Psoas muscle (tissue), 8 donors: ENCODE measurements at regions of chr17 and their contacts with region 1.

Region 1: DNA sequence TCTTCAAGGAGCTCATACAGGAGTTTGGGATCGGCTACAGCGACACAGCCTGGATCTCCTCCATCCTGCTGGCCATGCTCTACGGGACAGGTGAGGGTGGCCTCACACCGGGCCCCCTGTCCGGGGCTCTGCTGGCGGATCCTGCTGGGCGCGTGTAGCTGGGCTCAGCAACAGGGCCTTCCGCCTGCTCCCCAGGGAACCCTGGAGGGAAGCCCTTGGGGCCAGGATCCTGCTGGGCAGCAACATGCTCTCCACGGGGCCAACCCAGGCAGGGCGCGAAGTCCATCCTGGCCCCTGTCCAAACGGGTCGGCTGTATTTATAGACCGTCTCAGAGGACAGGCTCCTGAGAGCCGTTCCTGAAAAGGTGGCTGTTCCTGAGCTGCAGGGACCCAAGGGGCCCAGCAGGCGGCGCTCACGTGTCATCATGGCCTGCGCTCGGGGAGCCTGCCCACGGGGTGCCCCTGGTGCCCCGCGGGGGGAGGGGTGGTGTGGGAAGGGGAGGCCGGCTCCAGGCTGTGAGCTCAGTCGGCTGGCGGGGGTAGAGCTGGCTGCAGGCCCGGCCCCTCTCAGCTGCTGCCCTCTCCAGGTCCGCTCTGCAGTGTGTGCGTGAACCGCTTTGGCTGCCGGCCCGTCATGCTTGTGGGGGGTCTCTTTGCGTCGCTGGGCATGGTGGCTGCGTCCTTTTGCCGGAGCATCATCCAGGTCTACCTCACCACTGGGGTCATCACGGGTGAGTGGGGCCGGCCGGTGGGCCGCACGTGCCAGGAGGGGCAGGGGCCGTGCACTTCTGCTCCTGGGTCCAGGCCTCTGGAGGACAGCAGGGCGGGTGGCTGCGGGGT is 7.5 kb downstream of the SLC16A3 start:
- DNase-seq: peak; percentile 81 to 95
- ATAC-seq: peak; percentile 41 to 67 (median 54)
- H3K4me3 ChIP-seq: peak overlapping the region; percentile 31
- H3K27ac ChIP-seq: peak overlapping the region; percentile 73
- H3K4me1 ChIP-seq: peaks cover 90% of the 10 kb centered on the region
- H3K27me3 ChIP-seq: no peaks in the 10 kb centered on the region
- CTCF ChIP-seq: peak; percentile 89

Region 2: GRCh38 chr17:82153745-82154375 is 82.5 kb before region 1 on chr17:
- intact Hi-C with region 1: no loop called
- DNase-seq: peak; percentile 81 to 91
- ATAC-seq: peak; percentile 89 to 97 (median 90)
- H3K4me3 ChIP-seq: no peak overlapping the region
- H3K27ac ChIP-seq: no peak overlapping the region
- H3K4me1 ChIP-seq: peaks cover 12% of the 10 kb centered on the region
- H3K27me3 ChIP-seq: no peaks in the 10 kb centered on the region
- CTCF ChIP-seq: peak; percentile 92

Region 3: GRCh38 chr17:82273327-82274133 is 37.2 kb after region 1 on chr17 and contains the start of gene CSNK1D:
- intact Hi-C with region 1: loop called in 1 of 2 experiments (anchors 5 kb)
- DNase-seq: peak; percentile 91 to 95
- ATAC-seq: peak; percentile 88 to 95 (median 92)
- H3K4me3 ChIP-seq: peak within 1 kb of the TSS; percentile 83
- H3K27ac ChIP-seq: peak within 1 kb of the TSS; percentile 95
- H3K4me1 ChIP-seq: peaks cover 46% of the 10 kb centered on the region
- H3K27me3 ChIP-seq: no peaks in the 10 kb centered on the region
- CTCF ChIP-seq: no peak
- total RNA-seq, gene CSNK1D: 73.5 to 139 (median 116) TPM

Region 4: DNA sequence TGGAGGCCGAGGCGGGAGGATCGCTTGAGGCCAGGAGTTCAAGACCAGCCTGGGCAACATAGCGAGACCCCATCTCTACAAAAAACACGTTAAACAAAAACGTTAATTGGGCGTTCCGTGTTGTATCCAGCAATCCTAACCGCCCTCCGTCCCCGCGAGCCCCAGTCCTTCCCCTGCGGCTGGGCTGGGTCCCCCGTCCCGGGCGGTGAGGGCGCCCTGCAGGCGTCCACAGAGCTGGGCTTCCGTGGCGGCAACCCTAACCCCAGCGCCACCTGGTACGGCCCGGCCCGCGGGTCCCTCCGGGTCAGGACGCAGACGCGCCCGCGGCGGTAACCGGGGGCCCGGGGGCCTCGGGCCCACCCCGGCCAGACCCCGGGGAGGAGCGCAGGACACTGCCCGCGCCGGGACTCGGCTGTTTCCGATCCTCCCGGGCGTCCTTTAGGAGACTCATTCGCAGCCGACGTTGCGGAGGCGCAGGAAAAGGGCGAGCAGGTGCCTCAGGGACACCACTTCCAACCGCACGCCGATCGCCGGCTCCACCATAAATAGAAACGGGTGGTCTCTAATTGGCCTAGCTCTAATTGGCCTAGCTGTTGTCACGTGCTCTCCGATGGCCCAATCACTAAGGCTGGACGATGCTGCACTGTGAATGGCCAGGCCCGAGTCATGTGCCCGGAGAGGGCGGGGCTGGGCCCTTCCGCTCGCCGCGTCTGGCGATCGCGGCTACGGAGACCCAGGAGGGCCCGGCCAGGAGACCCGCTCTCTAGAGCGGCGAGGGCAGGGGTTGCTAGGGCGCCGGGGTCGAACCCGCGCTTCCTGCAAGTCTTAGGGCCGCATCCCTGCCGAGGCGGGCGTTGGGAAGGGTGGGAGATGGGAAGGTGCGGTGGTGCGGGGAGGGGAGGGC is 56.1 kb after region 1 on chr17:
- intact Hi-C with region 1: loop called in 1 of 2 experiments (anchors 1 kb)
- DNase-seq: peak; percentile 97 to 98
- ATAC-seq: peak; percentile 82 to 94 (median 84)
- H3K4me3 ChIP-seq: peak overlapping the region; percentile 92
- H3K27ac ChIP-seq: peak overlapping the region; percentile 99
- H3K4me1 ChIP-seq: peaks cover 40% of the 10 kb centered on the region
- H3K27me3 ChIP-seq: no peaks in the 10 kb centered on the region
- CTCF ChIP-seq: no peak

Region 5: DNA sequence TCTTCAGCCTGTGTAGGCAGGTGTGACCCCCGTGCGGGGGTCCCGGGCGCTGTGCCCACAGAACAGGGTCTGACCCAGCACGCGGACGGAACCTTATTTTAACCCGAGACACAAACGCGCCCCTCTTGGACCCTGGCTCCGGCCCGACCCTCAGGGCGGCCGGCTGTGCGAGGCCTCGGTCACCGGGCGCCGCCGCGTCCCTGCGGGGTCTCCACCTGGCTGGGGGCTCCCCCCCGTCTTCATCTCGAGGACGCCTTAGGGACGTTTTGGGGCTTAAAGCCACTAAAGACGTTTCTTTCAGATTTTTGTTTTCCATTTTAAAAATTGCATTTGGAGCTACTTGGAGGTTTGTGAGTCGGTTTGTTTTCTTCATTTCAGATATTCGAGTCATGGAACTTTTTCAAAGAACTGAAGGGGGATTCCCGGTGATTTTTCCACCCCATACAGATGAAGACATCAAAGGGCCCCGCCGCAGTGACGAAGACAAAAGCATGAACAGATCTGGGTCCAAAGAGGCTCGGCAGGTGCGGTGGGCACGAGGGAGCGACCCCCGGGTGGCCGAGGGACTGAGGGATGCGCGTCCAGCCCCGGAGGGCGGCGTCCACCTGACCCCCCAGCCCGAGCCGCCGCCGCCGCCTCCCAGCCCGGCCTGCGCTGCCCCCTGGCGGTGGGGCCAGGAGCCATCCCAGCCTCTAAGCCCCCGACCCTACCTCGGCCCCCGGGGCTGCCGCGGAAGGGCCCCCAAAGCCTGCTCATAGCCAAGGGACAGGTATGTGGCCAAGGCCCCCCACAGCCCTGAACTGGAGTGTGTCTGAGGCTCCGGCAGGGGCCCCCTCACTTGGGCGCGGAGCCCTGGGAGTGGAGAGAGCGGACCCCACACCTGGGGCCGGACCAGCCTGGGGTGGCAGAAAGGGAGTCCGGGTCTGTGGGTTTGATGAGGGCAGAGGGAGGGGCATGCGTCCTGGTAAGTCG is 84.9 kb after region 1 on chr17:
- intact Hi-C with region 1: loop called (anchors 1 to 2 kb)
- DNase-seq: no peak
- ATAC-seq: peak; percentile 68 to 91 (median 82)
- H3K4me3 ChIP-seq: peak overlapping the region; percentile 22
- H3K27ac ChIP-seq: no peak overlapping the region
- H3K4me1 ChIP-seq: peaks cover 5% of the 10 kb centered on the region
- H3K27me3 ChIP-seq: no peaks in the 10 kb centered on the region
- CTCF ChIP-seq: peak; percentile 86